GM10248 (cell line): ENCODE measurements at regions of chr6 and their contacts with region 1.

Region 1: DNA sequence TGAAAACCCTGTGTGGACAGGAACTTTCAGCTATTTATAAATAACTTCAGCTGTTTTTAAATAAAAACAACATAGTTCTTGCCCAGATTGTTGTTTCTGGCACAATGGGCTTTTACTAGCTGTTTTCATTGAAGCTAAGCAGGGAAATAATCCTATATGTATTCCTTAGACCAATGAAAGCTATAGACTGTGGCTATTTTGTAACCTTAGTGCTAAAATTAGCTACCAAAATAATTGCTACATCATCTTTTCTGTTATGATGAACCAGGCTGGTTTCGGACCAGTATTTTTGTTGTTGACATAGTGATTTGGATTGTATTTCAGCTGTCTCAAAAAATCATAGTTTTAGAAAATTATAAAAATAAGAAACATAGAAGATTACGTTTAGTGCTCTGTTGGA is 13.7 kb downstream of the PHF3 start:
- DNase-seq: no peak
- CTCF ChIP-seq: no peak

Region 2: GRCh38 chr6:63635588-63636517 is 13.4 kb before region 1 on chr6 and contains the start of gene PHF3:
- CTCF ChIA-PET with region 1: interaction called, 14 read pairs
- POLR2A ChIA-PET with region 1: no interaction called
- DNase-seq: peak; percentile 96
- CTCF ChIP-seq: no peak